Mammary epithelial cell (primary cell): ENCODE measurements at regions of chr6 and their contacts with region 1.

Region 1: GRCh38 chr6:38179300-38179699 is 359.8 kb downstream of the ZFAND3 start:
- DNase-seq: no peak
- H3K4me3 ChIP-seq: no peak overlapping the region
- H3K27ac ChIP-seq: no peak overlapping the region
- H3K4me1 ChIP-seq: no peaks in the 10 kb centered on the region
- H3K27me3 ChIP-seq: no peaks in the 10 kb centered on the region
- CTCF ChIP-seq: no peak

Region 2: GRCh38 chr6:37499433-37500293 is 679.6 kb before region 1 on chr6 and contains the start of gene CCDC167:
- CTCF ChIA-PET with region 1: no interaction called
- dilution Hi-C with region 1: no loop called
- in situ Hi-C with region 1: no loop called
- intact Hi-C with region 1: no loop called
- DNase-seq: peak; percentile 97
- H3K4me3 ChIP-seq: peak within 1 kb of the TSS; percentile 62 to 81 (median 72)
- H3K27ac ChIP-seq: peak within 1 kb of the TSS; percentile 74
- H3K4me1 ChIP-seq: peaks cover 7% of the 10 kb centered on the region
- H3K27me3 ChIP-seq: no peaks in the 10 kb centered on the region
- CTCF ChIP-seq: no peak
- total RNA-seq, gene CCDC167: 13.2 to 13.3 TPM

Region 3: GRCh38 chr6:38212579-38212978 is 33.3 kb after region 1 on chr6:
- CTCF ChIA-PET with region 1: no interaction called
- dilution Hi-C with region 1: no loop called
- in situ Hi-C with region 1: no loop called
- intact Hi-C with region 1: no loop called
- DNase-seq: no peak
- H3K4me3 ChIP-seq: no peak overlapping the region
- H3K27ac ChIP-seq: no peak overlapping the region
- H3K4me1 ChIP-seq: no peaks in the 10 kb centered on the region
- H3K27me3 ChIP-seq: no peaks in the 10 kb centered on the region
- CTCF ChIP-seq: no peak

Region 4: GRCh38 chr6:38364128-38364527 is 184.8 kb after region 1 on chr6:
- CTCF ChIA-PET with region 1: no interaction called
- dilution Hi-C with region 1: no loop called
- in situ Hi-C with region 1: no loop called
- intact Hi-C with region 1: no loop called
- DNase-seq: no peak
- H3K4me3 ChIP-seq: no peak overlapping the region
- H3K27ac ChIP-seq: no peak overlapping the region
- H3K4me1 ChIP-seq: no peaks in the 10 kb centered on the region
- H3K27me3 ChIP-seq: no peaks in the 10 kb centered on the region
- CTCF ChIP-seq: no peak

Region 5: DNA sequence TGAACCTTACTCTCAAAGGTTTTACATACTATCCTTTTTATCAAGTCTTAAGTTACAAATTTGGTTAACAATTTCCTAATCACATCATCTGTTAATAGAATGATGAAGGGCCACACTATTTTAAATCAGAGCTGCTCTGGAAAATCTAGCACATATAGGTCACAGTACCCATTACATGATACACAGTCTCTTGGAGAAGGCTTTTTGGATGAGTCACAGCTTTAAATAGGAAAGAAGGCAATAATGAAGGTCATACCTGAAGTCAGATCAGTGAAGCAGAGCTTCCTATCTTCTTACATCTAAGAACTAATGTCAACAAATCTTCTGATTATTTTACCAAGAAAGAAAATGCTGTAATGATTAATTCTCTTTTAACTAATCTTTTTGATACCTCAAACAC is 211.9 kb after region 1 on chr6:
- CTCF ChIA-PET with region 1: no interaction called
- dilution Hi-C with region 1: loop called (anchors 10 kb)
- in situ Hi-C with region 1: no loop called
- intact Hi-C with region 1: no loop called
- DNase-seq: peak; percentile 26
- H3K4me3 ChIP-seq: no peak overlapping the region
- H3K27ac ChIP-seq: no peak overlapping the region
- H3K4me1 ChIP-seq: peaks cover 11% of the 10 kb centered on the region
- H3K27me3 ChIP-seq: no peaks in the 10 kb centered on the region
- CTCF ChIP-seq: no peak